ENCODE measurements at regions of chr10 and their contacts with region 1.

Region 1: DNA sequence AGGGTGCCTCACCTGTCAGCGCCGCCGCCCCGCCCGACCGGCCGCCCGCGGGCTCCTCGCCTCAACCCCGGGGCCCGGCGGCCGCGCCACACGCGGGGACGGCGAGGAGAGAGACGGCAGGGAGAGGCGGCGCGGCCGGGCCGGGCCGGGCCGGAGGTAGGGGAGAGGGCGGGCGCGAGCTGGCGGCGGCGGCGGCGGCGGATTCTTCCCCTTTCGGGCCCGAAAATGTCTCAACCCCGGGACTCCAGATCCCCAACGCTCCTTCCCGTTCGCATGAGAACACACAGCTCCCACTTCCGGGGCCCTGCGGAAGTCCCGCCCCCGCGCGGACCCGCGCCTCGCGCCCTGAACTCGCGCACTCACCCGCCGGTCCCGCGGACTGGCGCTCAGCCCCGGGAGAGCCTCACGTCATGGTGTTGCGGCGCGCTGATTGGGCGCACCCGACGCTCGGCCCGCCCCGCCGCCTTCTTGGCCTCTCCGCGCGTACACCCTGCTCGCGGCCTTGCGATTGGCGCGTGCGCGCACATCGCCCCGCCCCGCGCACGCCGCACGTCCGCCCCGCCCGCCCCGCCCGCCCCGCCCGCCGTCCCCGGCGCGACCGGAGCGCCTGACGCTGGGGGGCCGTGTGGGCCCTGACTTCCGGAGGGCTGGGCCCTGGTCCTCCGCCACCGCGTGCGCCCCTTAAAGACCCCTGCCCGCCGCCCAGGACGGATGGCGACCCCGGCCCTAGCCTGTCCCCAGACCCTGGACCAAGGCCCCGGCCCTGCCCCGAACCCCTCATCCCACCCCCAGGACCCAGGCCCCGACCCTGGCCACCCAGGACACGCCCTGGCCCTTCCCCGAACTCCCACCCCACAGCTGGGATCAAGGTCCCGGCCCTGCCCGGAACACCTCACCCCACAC is at the start of gene LARP4B:
- DNase-seq: peak; percentile 97
- H3K4me3 Mint-ChIP-seq: peak within 1 kb of the TSS; percentile 91
- H3K27ac Mint-ChIP-seq: peak within 1 kb of the TSS; percentile 89
- H3K4me1 Mint-ChIP-seq: peaks cover 38% of the 10 kb centered on the region
- H3K27me3 Mint-ChIP-seq: no peaks in the 10 kb centered on the region
- total RNA-seq, gene LARP4B: 99.0 to 103 TPM

Region 2: GRCh38 chr10:944034-944831 is 12.6 kb after region 1 on chr10:
- CTCF ChIA-PET with region 1: no interaction called
- POLR2A ChIA-PET with region 1: interaction called, 15 read pairs
- DNase-seq: peak; percentile 48
- H3K4me3 Mint-ChIP-seq: no peak overlapping the region
- H3K27ac Mint-ChIP-seq: peak overlapping the region; percentile 7
- H3K4me1 Mint-ChIP-seq: peaks cover 12% of the 10 kb centered on the region
- H3K27me3 Mint-ChIP-seq: no peaks in the 10 kb centered on the region

Region 3: GRCh38 chr10:987870-988666 is 56.4 kb after region 1 on chr10 and contains the start of gene GTPBP4:
- CTCF ChIA-PET with region 1: interaction called, 4 read pairs
- POLR2A ChIA-PET with region 1: interaction called, 69 read pairs
- DNase-seq: peak; percentile 97
- H3K4me3 Mint-ChIP-seq: peak within 1 kb of the TSS; percentile 98
- H3K27ac Mint-ChIP-seq: peak within 1 kb of the TSS; percentile 85
- H3K4me1 Mint-ChIP-seq: peaks cover 39% of the 10 kb centered on the region
- H3K27me3 Mint-ChIP-seq: no peaks in the 10 kb centered on the region
- total RNA-seq, gene GTPBP4: 50.9 to 59.6 TPM

Region 4: GRCh38 chr10:1048732-1049424 is 117.2 kb after region 1 on chr10 and contains the start of gene IDI1:
- CTCF ChIA-PET with region 1: interaction called, 3 read pairs
- POLR2A ChIA-PET with region 1: interaction called, 28 read pairs
- DNase-seq: peak; percentile 98
- H3K4me3 Mint-ChIP-seq: peak within 1 kb of the TSS; percentile 95
- H3K27ac Mint-ChIP-seq: peak within 1 kb of the TSS; percentile 94
- H3K4me1 Mint-ChIP-seq: peaks cover 69% of the 10 kb centered on the region
- H3K27me3 Mint-ChIP-seq: no peaks in the 10 kb centered on the region
- total RNA-seq, gene IDI1: 96.0 to 96.5 TPM

Region 5: DNA sequence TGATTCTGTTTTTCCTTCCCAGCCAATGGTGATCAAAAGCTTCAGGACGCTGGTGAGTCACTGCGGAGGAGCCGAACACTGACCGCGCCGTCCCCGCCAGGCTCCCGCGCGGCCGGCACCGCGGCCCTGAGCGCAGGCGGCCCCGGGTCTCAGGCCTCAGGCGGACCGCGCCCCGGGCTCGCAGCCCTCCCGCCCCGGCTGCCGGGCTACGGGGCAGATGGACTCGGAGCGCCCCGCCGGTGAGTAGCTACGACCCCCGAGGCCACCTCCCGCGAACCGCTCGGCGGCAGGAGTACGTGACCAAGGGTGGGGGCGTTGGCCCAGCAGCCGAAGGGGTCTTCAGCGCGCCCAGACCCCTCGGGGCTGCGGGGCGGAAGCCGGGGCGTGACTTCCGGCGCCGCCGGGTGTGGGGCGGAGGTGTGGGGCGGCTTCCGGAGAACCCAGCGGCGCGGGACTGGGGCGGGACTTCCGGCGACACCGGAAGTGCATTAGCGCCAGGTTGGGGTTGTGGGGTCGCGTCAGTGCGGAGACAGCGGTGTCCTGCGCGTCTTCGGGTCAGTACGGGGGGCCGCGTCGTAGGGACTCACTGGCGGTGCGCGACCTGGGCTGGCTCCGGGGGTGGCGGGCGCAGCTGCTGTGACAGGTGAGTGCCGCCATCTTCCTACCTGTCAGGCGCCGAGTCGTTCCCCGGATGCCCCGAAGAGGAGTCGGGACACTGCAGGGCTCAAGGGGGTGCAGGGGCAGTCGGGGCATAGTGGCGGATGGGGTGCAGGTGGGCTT is 124.8 kb after region 1 on chr10 and contains the start of gene WDR37:
- CTCF ChIA-PET with region 1: no interaction called
- POLR2A ChIA-PET with region 1: interaction called, 12 read pairs
- DNase-seq: peak; percentile 89
- H3K4me3 Mint-ChIP-seq: peak within 1 kb of the TSS; percentile 99
- H3K27ac Mint-ChIP-seq: peak within 1 kb of the TSS; percentile 96
- H3K4me1 Mint-ChIP-seq: peaks cover 87% of the 10 kb centered on the region
- H3K27me3 Mint-ChIP-seq: no peaks in the 10 kb centered on the region
- total RNA-seq, gene WDR37: 31.4 to 31.6 TPM